ENCODE measurements at regions of chr5 and their contacts with region 1.

Region 1: DNA sequence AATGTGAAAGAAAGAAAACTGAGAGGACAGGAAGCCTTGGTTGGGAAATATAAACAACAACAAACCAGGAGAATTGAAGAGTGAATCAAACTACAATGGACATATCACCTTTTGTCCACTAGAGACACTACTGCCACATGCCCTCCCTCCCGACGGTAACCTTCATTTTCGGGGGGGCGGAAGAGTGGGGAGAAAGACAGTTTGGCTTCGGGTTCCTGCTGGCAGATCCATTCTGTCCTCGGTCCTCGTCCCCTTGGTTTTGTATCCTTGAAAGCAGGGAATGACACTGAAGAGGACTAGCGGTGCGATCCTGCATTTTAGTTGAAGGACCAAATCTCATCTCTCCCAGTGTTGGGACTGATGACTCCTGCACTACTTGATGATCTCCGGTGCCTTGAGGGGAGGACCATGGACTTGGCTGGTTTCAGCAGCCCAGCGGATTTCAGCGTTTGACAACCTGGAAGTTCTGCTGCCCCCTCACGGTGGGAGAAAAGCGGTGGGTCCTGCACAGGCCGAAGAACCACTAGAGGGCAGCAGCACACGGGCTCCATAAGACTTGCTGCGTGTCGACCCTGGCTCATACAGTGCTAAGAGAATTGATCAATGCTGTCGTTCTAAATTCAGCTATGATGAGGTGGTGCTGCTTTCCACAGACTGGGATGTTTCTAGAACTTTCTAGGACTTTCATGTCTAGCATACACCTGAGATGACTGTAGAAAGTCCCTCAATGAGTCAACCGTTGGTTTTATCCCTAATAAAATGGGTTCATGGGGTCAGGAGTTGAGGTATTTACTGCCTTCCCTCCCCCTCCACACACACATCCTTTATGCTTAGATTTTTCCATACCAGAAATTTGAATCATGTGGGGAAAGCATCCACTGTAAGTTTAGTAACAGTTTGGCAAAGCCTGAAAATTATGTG is 15.1 kb upstream of the ZNF131 start:
- DNase-seq: peak; percentile 93
- ATAC-seq: peak; percentile 94
- H3K4me3 Mint-ChIP-seq: peak overlapping the region; percentile 71
- H3K27ac Mint-ChIP-seq: peak overlapping the region; percentile 84
- H3K4me1 Mint-ChIP-seq: peaks cover 38% of the 10 kb centered on the region
- H3K27me3 Mint-ChIP-seq: no peaks in the 10 kb centered on the region
- CTCF ChIP-seq: peak; percentile 99

Region 2: DNA sequence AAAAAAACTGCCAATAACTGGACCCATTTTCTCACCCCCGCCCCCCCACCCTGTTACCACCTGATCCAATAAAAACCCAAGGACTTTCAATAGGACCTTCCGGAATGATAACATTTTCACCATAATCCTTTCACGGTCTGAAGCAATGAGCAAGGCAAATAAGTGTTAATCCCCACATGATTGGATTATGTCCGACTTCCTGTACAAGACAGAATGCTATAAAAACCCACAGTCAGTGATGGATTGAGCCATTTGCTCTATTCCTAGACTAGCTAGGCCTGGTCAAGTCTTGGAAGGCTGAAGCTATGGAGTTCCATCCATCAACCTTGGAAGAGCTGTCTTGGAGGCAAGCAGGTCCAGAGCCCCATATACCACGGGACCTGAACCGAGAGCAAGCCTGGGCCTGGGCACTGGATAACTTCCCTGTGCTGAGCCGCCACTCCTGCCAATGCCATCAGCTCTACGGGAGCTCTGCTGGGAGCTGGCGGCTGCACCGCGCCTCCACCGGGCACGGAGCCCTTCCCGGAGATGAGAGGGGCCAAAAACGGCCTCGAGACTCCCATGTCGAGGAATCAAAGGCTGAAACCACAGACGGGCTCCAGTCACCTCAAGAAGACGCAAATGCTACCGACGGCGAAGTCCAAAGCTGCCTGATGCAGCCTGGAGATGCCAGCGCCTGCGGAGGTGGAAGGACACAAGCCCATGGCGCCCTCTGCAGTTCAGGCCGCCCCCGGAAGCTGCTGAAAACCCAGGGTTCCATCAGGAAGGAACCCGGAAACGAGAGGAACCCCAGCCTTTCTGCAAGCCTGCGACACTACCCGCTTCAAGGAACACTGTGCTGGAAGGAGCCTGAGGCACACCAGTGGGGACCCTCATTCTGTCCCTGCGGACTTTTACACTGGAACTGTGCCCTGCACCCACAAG is 134.7 kb before region 1 on chr5:
- CTCF ChIA-PET with region 1: no interaction called
- POLR2A ChIA-PET with region 1: no interaction called
- intact Hi-C with region 1: no loop called
- DNase-seq: peak; percentile 37
- ATAC-seq: no peak
- H3K4me3 Mint-ChIP-seq: no peak overlapping the region
- H3K27ac Mint-ChIP-seq: no peak overlapping the region
- H3K4me1 Mint-ChIP-seq: peaks cover 6% of the 10 kb centered on the region
- H3K27me3 Mint-ChIP-seq: no peaks in the 10 kb centered on the region
- CTCF ChIP-seq: no peak

Region 3: GRCh38 chr5:43008369-43009153 is 97.1 kb before region 1 on chr5:
- CTCF ChIA-PET with region 1: no interaction called
- POLR2A ChIA-PET with region 1: no interaction called
- intact Hi-C with region 1: loop called (anchors 5 kb)
- DNase-seq: peak; percentile 95
- ATAC-seq: peak; percentile 70
- H3K4me3 Mint-ChIP-seq: peak overlapping the region; percentile 93
- H3K27ac Mint-ChIP-seq: peak overlapping the region; percentile 99
- H3K4me1 Mint-ChIP-seq: peaks cover 30% of the 10 kb centered on the region
- H3K27me3 Mint-ChIP-seq: no peaks in the 10 kb centered on the region
- CTCF ChIP-seq: no peak

Region 4: GRCh38 chr5:43073597-43074546 is 31.8 kb before region 1 on chr5:
- CTCF ChIA-PET with region 1: interaction called, 9 read pairs
- POLR2A ChIA-PET with region 1: no interaction called
- intact Hi-C with region 1: loop called (anchors 5 kb)
- DNase-seq: peak; percentile 63
- ATAC-seq: peak; percentile 92
- H3K4me3 Mint-ChIP-seq: no peak overlapping the region
- H3K27ac Mint-ChIP-seq: peak overlapping the region; percentile 59
- H3K4me1 Mint-ChIP-seq: peaks cover 36% of the 10 kb centered on the region
- H3K27me3 Mint-ChIP-seq: no peaks in the 10 kb centered on the region
- CTCF ChIP-seq: peak; percentile 86

Region 5: GRCh38 chr5:43085453-43085852 is 20.2 kb before region 1 on chr5:
- CTCF ChIA-PET with region 1: interaction called, 16 read pairs
- POLR2A ChIA-PET with region 1: interaction called, 4 read pairs
- intact Hi-C with region 1: no loop called
- DNase-seq: no peak
- ATAC-seq: no peak
- H3K4me3 Mint-ChIP-seq: no peak overlapping the region
- H3K27ac Mint-ChIP-seq: no peak overlapping the region
- H3K4me1 Mint-ChIP-seq: no peaks in the 10 kb centered on the region
- H3K27me3 Mint-ChIP-seq: no peaks in the 10 kb centered on the region
- CTCF ChIP-seq: no peak

Region 6: GRCh38 chr5:43120720-43121564 is 15.3 kb after region 1 on chr5 and contains the start of gene ZNF131:
- CTCF ChIA-PET with region 1: interaction called, 95 read pairs
- POLR2A ChIA-PET with region 1: interaction called, 9 read pairs
- intact Hi-C with region 1: no loop called
- DNase-seq: peak; percentile 97
- ATAC-seq: peak; percentile 93
- H3K4me3 Mint-ChIP-seq: peak within 1 kb of the TSS; percentile 89
- H3K27ac Mint-ChIP-seq: peak within 1 kb of the TSS; percentile 96
- H3K4me1 Mint-ChIP-seq: peaks cover 32% of the 10 kb centered on the region
- H3K27me3 Mint-ChIP-seq: no peaks in the 10 kb centered on the region
- CTCF ChIP-seq: no peak
- total RNA-seq, gene ZNF131: 34.8 to 36.6 TPM

Region 7: DNA sequence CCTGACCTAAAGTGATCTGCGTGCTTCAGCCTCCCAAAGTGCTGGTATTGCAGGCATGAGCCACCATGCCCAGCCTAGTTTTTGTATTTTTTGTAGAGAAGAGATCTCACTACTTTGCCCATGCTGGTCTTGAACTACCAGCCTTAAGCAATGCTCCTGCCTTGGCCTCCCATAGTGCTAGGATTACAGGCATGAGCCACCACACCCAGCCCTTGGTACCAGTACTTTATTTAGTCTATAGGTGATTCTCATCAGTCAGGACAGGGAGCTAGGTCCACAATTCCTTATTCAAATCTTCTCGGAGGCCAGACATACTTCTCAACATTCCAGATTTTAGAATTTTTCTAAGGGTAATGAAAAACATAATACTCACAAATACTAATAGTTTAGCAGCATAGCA is 23.5 kb after region 1 on chr5:
- CTCF ChIA-PET with region 1: interaction called, 95 read pairs
- POLR2A ChIA-PET with region 1: no interaction called
- intact Hi-C with region 1: no loop called
- DNase-seq: no peak
- ATAC-seq: no peak
- H3K4me3 Mint-ChIP-seq: no peak overlapping the region
- H3K27ac Mint-ChIP-seq: no peak overlapping the region
- H3K4me1 Mint-ChIP-seq: peaks cover 45% of the 10 kb centered on the region
- H3K27me3 Mint-ChIP-seq: no peaks in the 10 kb centered on the region
- CTCF ChIP-seq: no peak

Region 8: GRCh38 chr5:43191740-43192557 is 86.3 kb after region 1 on chr5 and contains the start of gene NIM1K:
- CTCF ChIA-PET with region 1: interaction called, 4 read pairs
- POLR2A ChIA-PET with region 1: no interaction called
- intact Hi-C with region 1: loop called (anchors 5 kb)
- DNase-seq: peak; percentile 53
- ATAC-seq: peak; percentile 61
- H3K4me3 Mint-ChIP-seq: peak within 1 kb of the TSS; percentile 82
- H3K27ac Mint-ChIP-seq: peak within 1 kb of the TSS; percentile 75
- H3K4me1 Mint-ChIP-seq: peaks cover 29% of the 10 kb centered on the region
- H3K27me3 Mint-ChIP-seq: peaks cover 21% of the 10 kb centered on the region
- CTCF ChIP-seq: no peak
- total RNA-seq, gene NIM1K: 2.1 to 3.2 TPM

Measured in activated CD8-positive, alpha-beta T cell treated with anti-CD3 and anti-CD28 coated beads for 36 hours (primary cell).